IMR-90 (cell line): ENCODE measurements at regions of chr18 and their contacts with region 1.

Region 1: GRCh38 chr18:35040988-35041814 is at the start of gene MAPRE2:
- DNase-seq: peak; percentile 96
- ATAC-seq: peak; percentile 95
- H3K4me3 ChIP-seq: peak within 1 kb of the TSS; percentile 89
- H3K27ac ChIP-seq: peak within 1 kb of the TSS; percentile 77
- H3K4me1 ChIP-seq: peaks cover 3% of the 10 kb centered on the region; the same call in 1 of the 2 replicates
- H3K27me3 ChIP-seq: peaks cover 1% of the 10 kb centered on the region; the same call in 1 of the 2 replicates
- CTCF ChIP-seq: no peak
- POLR2A ChIP-seq: peak; percentile 89
- RAD21 ChIP-seq: no peak
- total RNA-seq, gene MAPRE2: 23.8 and 24.2 TPM in 2 replicates

Region 2: GRCh38 chr18:34867520-34867919 is 173.7 kb before region 1 on chr18:
- CTCF ChIA-PET with region 1: interaction called, 4 read pairs
- POLR2A ChIA-PET with region 1: no interaction called
- dilution Hi-C with region 1: no loop called
- in situ Hi-C with region 1: no loop called
- intact Hi-C with region 1: loop called (anchors 1 kb)
- DNase-seq: no peak
- ATAC-seq: no peak
- H3K4me3 ChIP-seq: no peak overlapping the region
- H3K27ac ChIP-seq: no peak overlapping the region
- H3K4me1 ChIP-seq: peaks cover 2% of the 10 kb centered on the region; the same call in 1 of the 2 replicates
- H3K27me3 ChIP-seq: no peaks in the 10 kb centered on the region
- CTCF ChIP-seq: no peak
- POLR2A ChIP-seq: no peak
- RAD21 ChIP-seq: no peak

Region 3: GRCh38 chr18:35019933-35020332 is 21.3 kb before region 1 on chr18:
- CTCF ChIA-PET with region 1: no interaction called
- POLR2A ChIA-PET with region 1: interaction called, 11 read pairs
- dilution Hi-C with region 1: no loop called
- in situ Hi-C with region 1: no loop called
- intact Hi-C with region 1: no loop called
- DNase-seq: peak; percentile 44
- ATAC-seq: no peak
- H3K4me3 ChIP-seq: no peak overlapping the region
- H3K27ac ChIP-seq: no peak overlapping the region
- H3K4me1 ChIP-seq: peaks cover 5% of the 10 kb centered on the region
- H3K27me3 ChIP-seq: no peaks in the 10 kb centered on the region
- CTCF ChIP-seq: no peak
- POLR2A ChIP-seq: no peak
- RAD21 ChIP-seq: no peak